Sigmoid colon (tissue), 7 donors: ENCODE measurements at regions of chr12 and their contacts with region 1.

Region 1: GRCh38 chr12:75628916-75629315 is 117.5 kb upstream of the KRR1 start:
- DNase-seq: no peak
- H3K4me3 ChIP-seq: no peak overlapping the region
- H3K27ac ChIP-seq: no peak overlapping the region
- H3K4me1 ChIP-seq: no peaks in the 10 kb centered on the region
- H3K27me3 ChIP-seq: no peaks in the 10 kb centered on the region
- CTCF ChIP-seq: no peak
- EP300 ChIP-seq: no peak
- POLR2A ChIP-seq: no peak

Region 2: DNA sequence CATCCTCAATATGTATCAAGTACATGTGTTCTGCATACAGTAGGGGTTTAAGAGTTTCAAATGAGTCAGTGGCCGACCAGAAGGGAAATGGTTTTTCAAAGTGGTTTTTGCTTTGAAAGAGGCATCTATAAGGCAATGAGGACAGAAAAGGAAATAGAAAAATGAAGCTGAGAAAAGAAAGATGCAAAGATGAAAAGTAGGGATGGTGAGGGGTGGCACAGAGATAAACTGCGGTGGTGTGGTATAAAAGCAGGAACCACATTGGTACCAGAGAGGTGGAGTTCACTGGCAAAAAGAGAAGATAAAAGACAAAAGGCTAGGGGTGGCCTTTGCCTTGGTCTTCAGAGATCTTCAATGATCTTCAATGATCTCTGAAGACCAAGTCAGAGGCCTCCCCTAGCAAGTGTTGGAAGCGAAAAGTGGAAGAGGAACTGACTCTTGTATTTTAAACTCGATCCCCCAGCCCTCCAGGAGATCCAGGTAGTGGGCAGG is 26.4 kb after region 1 on chr12:
- intact Hi-C with region 1: loop called (anchors 1 kb)
- DNase-seq: no peak
- H3K4me3 ChIP-seq: no peak overlapping the region
- H3K27ac ChIP-seq: no peak overlapping the region
- H3K4me1 ChIP-seq: no peaks in the 10 kb centered on the region
- H3K27me3 ChIP-seq: no peaks in the 10 kb centered on the region
- CTCF ChIP-seq: no peak
- EP300 ChIP-seq: no peak
- POLR2A ChIP-seq: no peak

Region 3: GRCh38 chr12:75727577-75727976 is 98.7 kb after region 1 on chr12:
- intact Hi-C with region 1: no loop called
- DNase-seq: no peak
- H3K4me3 ChIP-seq: no peak overlapping the region
- H3K27ac ChIP-seq: no peak overlapping the region
- H3K4me1 ChIP-seq: peaks cover 0 to 37% (median 32%) of the 10 kb centered on the region in 4 donors
- H3K27me3 ChIP-seq: no peaks in the 10 kb centered on the region
- CTCF ChIP-seq: no peak
- EP300 ChIP-seq: no peak
- POLR2A ChIP-seq: no peak